GM18951 (cell line): ENCODE measurements at regions of chr12 and their contacts with region 1.

Region 1: DNA sequence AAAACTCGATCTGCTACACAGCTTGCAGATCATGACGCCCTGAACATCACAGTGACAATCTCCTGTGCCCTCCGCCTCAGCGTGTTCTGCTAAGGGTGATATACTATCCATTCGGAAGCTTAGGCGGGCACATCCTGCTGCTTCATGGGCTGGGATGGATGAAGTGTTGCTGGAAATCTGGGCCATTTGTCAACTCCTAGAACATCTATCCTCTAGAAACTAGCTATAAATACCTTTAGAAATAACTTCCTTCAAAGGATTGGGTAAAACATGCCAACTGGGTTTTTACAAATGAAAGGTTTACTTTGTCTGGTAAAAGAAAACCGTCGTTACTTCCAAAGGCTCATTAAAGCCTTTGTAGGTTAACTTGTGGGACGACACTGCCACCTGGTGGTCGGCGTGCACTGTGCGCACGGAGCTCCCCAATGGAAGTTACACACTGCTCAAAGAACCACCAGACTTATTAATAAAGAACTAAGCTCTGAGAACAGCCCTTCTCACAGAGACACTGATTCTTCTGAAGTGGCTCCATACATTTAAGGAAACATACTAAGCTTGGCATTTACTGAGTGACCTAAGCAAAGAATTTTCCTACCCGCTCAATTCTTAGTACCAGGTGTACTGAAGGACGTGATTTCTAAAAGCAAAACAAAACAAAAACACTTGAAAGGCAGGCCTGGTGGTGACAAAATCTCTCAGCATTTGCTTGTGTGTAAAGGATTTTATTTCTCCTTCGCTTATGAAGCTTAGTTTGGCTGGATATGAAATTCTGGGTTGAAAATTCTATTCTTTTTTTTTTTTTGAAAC is 21.6 kb upstream of the CACNA2D4 start:
- POLR2A ChIP-seq: no peak

Region 2: DNA sequence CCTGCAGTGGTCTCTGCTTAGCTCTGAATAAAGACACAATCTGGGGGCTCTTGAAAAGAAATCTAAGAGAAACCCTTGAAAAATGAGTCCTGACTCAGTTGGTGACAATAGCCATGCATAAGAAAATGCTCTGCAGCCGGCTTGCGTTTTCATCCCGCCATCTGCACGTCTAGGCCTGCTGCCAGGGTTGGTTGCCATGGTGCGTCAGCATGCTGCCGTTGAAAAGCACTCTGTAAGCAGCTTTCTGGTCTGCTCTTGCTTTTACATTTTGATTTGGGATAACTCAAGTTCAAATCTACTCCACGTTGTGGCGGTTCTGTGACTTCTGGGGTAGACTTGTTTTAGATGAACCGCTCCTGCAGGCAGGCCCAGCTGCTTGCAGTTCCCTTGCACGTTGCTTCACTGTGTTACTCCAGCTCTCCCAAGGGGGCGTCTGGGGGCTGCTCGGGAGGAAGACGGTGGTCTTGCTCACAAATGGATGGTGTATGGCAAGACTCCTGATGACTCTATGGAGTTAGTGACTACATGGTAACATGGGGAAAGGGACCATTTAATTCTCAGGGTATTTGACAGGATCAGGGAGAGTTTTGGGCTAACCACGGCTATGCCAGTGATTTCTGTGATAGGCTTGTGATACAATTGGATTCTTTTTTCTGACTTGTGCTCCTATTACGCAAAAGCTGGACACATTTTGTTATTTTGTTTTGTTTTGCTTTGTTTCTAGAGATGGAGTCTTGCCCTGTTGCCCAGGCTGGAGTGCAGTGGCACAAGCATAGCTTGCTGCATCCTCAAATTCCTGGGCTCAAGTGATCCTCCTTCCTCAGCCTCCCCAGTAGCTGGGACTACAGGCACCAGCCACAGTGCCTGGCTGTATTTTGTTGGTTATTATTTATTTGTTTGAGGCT is 295.2 kb before region 1 on chr12:
- in situ Hi-C with region 1: loop called (anchors 5 kb)
- POLR2A ChIP-seq: no peak